ENCODE measurements at regions of chr14 and their contacts with region 1.

Region 1: GRCh38 chr14:72893636-72894321 is at the start of gene DPF3:
- DNase-seq: peak; percentile 88 to 93 (median 89)
- H3K4me3 ChIP-seq: peak within 1 kb of the TSS; percentile 78 to 79
- H3K4me3 Mint-ChIP-seq: peak within 1 kb of the TSS; percentile 94 to 99 (median 96)
- H3K27ac ChIP-seq: peak within 1 kb of the TSS; percentile 33
- H3K27ac Mint-ChIP-seq: peak within 1 kb of the TSS; percentile 79 to 91 (median 87)
- H3K4me1 ChIP-seq: peaks cover 27% of the 10 kb centered on the region
- H3K4me1 Mint-ChIP-seq: peaks cover 12 to 29% (median 22%) of the 10 kb centered on the region in 4 donors
- H3K27me3 ChIP-seq: peaks cover 9% of the 10 kb centered on the region
- H3K27me3 Mint-ChIP-seq: peaks cover 26 to 39% of the 10 kb centered on the region in 2 donors
- total RNA-seq, gene DPF3: 0.35 TPM in 1 of 2 experiments, not detected in the other

Region 2: DNA sequence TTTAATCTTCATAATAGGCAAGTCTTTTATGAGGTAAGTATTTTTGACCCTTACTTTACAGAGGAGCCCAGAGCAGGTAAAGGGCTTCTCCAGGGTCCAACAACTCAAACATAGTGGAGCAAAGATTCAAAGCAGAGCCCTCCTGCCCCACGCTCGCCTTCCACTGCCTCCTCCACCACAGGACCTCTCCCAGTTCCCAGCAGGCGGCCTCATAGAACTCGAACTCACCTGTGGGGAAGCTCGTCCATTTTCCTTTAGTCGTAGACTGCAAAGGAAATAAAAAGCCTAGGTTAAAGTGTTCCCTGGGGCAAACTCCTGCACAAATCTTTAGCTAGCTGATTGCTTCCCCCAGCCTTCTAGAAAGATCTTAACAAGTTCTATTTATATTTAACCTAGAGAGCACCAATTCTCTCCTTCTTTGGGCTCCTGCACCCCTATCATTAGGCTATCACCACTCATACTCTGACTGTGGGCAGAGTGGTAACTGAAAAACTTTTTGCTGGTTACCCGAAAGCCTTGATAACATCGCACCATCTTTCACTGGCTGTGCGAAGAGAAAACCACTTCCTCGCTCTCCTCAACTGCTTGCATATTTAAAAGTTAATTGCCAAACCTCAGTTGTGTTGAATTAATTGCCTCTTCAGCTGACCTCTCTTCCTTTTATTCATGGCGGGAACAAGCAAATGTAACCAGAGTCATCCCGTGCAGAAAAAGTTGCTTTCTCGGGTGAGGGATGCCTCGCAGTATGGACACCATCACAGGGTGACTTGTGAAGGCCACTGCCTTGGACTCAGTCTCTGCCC is 299.5 kb before region 1 on chr14:
- CTCF ChIA-PET with region 1: no interaction called
- POLR2A ChIA-PET with region 1: no interaction called
- intact Hi-C with region 1: loop called (anchors 5 kb)
- DNase-seq: peak; percentile 62 to 72 (median 67)
- H3K4me3 ChIP-seq: no peak overlapping the region
- H3K4me3 Mint-ChIP-seq: peak overlapping the region in 7 of 8 donors; percentile 22 to 78 (median 62)
- H3K27ac ChIP-seq: no peak overlapping the region
- H3K27ac Mint-ChIP-seq: peak overlapping the region; percentile 3 to 71 (median 54)
- H3K4me1 ChIP-seq: peaks cover 60% of the 10 kb centered on the region
- H3K4me1 Mint-ChIP-seq: peaks cover 37 to 68% (median 52%) of the 10 kb centered on the region in 4 donors
- H3K27me3 ChIP-seq: no peaks in the 10 kb centered on the region
- H3K27me3 Mint-ChIP-seq: peaks cover 0 to 3% of the 10 kb centered on the region in 2 donors

Region 3: GRCh38 chr14:72812292-72812911 is 81.4 kb before region 1 on chr14:
- CTCF ChIA-PET with region 1: no interaction called
- POLR2A ChIA-PET with region 1: no interaction called
- intact Hi-C with region 1: loop called (anchors 10 kb)
- DNase-seq: no peak
- H3K4me3 ChIP-seq: no peak overlapping the region
- H3K4me3 Mint-ChIP-seq: no peak overlapping the region
- H3K27ac ChIP-seq: no peak overlapping the region
- H3K27ac Mint-ChIP-seq: peak overlapping the region in 1 of 7 donors; percentile 57
- H3K4me1 ChIP-seq: peaks cover 14% of the 10 kb centered on the region
- H3K4me1 Mint-ChIP-seq: peaks cover 10 to 27% (median 18%) of the 10 kb centered on the region in 4 donors
- H3K27me3 ChIP-seq: no peaks in the 10 kb centered on the region
- H3K27me3 Mint-ChIP-seq: no peaks in the 10 kb centered on the region

Region 4: GRCh38 chr14:72926292-72927028 is 32.7 kb after region 1 on chr14 and contains the start of gene DCAF4:
- CTCF ChIA-PET with region 1: no interaction called
- POLR2A ChIA-PET with region 1: interaction called, 9 read pairs
- intact Hi-C with region 1: loop called (anchors 1 kb)
- DNase-seq: peak; percentile 90 to 98 (median 93)
- H3K4me3 ChIP-seq: peak within 1 kb of the TSS; percentile 73 to 82
- H3K4me3 Mint-ChIP-seq: peak within 1 kb of the TSS; percentile 91 to 99 (median 93)
- H3K27ac ChIP-seq: peak within 1 kb of the TSS; percentile 66
- H3K27ac Mint-ChIP-seq: peak within 1 kb of the TSS; percentile 93 to 97 (median 95)
- H3K4me1 ChIP-seq: peaks cover 12% of the 10 kb centered on the region
- H3K4me1 Mint-ChIP-seq: peaks cover 7 to 20% (median 13%) of the 10 kb centered on the region in 4 donors
- H3K27me3 ChIP-seq: no peaks in the 10 kb centered on the region
- H3K27me3 Mint-ChIP-seq: peaks cover 0 to 2% of the 10 kb centered on the region in 2 donors
- total RNA-seq, gene DCAF4: 25.2 to 26.9 TPM